AG04449 (cell line): ENCODE measurements at regions of chr9 and their contacts with region 1.

Region 1: DNA sequence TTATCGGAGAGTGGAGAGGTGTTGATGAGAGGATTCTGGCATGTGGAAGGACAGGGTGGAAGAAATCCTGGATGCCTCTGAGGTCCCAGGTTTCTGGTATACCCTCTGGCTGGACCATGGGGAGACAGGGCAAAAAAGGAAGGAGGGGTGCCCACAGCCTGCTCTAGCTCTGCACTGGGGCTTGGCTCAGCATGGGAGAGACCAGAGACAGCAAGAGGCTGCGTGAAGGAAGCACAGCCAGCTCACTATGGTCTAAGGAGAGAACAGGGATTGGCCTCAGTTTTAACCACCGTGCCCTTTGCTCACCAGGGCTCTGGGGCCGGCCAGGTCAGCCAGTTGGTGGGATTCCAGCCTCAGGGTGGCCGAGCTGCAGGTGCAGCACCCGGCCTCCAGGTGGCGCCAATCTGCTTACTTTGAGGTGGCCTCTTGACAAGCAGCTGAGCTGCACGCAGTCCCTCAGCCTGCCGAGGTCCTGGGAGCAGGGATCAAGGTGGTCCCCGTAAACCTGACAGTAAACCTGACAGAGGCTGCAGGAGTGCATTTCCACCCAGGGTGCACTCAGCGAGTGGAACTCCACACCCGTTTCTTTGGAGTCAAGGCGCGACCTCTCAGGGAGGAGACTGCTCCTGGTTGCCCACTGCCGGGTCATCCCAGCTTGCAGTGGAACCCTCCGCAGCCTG is 25.0 kb upstream of the SPTLC1 start:
- DNase-seq: no peak
- H3K4me3 ChIP-seq: peak overlapping the region; percentile 12; the same call in 1 of the 2 replicates
- CTCF ChIP-seq: peak; percentile 99

Region 2: GRCh38 chr9:92164490-92164889 is 24.3 kb after region 1 on chr9:
- CTCF ChIA-PET with region 1: interaction called, 21 read pairs
- POLR2A ChIA-PET with region 1: no interaction called
- DNase-seq: no peak
- H3K4me3 ChIP-seq: no peak overlapping the region
- CTCF ChIP-seq: no peak

Region 3: GRCh38 chr9:92196909-92197308 is 56.7 kb after region 1 on chr9:
- CTCF ChIA-PET with region 1: interaction called, 29 read pairs
- POLR2A ChIA-PET with region 1: no interaction called
- DNase-seq: peak; percentile 7
- H3K4me3 ChIP-seq: no peak overlapping the region
- CTCF ChIP-seq: no peak

Region 4: DNA sequence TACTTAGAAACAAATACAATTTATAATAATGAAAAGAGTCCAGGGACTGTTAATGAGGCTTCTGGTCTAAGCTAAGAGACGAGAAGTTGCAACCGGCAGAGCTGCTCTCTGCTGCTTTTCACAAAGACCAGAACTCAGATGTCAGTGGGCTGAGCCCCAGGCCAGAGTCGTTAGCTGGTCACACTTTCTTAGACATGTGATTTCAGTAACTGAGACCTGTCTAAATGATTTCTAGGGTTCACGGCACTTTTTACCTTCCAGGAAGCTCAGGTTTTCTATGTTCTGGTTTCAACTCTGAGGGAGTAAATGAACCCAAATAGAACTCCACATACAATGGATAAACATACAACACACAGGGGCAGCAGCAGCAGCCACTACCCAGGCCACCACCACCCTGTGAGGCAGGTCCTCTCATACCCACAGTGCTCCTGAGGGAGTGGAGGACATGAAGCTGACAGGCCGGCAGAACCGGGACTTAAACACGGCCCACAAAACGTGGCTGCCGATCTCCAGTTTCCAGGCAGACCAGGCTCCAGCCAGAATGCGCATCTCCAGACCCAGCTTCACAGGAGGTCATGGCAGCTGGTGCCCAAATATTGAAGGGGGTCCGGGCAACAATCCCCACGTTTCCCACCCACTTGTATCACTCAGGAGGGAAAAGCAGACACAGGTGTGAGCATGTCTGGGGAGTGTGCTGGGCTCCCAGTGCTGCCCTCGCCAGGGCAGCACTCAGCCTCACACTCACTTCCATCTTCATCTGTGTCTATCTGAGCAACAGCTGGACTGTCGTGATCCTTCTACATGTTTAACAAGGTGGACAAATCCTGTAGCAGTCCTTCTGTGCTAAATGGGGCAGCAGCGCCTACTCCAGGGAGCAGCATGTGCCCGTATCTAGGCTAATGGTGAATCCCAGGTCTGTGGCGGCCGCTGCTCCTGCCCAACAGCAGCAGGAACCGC is 114.4 kb after region 1 on chr9:
- CTCF ChIA-PET with region 1: interaction called, 91 read pairs
- POLR2A ChIA-PET with region 1: no interaction called
- DNase-seq: no peak
- H3K4me3 ChIP-seq: no peak overlapping the region
- CTCF ChIP-seq: no peak

Region 5: GRCh38 chr9:92308893-92309292 is 168.7 kb after region 1 on chr9:
- CTCF ChIA-PET with region 1: interaction called, 26 read pairs
- POLR2A ChIA-PET with region 1: no interaction called
- DNase-seq: no peak
- H3K4me3 ChIP-seq: no peak overlapping the region
- CTCF ChIP-seq: no peak

Region 6: GRCh38 chr9:92406477-92406876 is 266.3 kb after region 1 on chr9:
- CTCF ChIA-PET with region 1: no interaction called
- POLR2A ChIA-PET with region 1: no interaction called
- DNase-seq: no peak
- H3K4me3 ChIP-seq: no peak overlapping the region
- CTCF ChIP-seq: no peak